ENCODE measurements at regions of chr12 and their contacts with region 1.

Region 1: DNA sequence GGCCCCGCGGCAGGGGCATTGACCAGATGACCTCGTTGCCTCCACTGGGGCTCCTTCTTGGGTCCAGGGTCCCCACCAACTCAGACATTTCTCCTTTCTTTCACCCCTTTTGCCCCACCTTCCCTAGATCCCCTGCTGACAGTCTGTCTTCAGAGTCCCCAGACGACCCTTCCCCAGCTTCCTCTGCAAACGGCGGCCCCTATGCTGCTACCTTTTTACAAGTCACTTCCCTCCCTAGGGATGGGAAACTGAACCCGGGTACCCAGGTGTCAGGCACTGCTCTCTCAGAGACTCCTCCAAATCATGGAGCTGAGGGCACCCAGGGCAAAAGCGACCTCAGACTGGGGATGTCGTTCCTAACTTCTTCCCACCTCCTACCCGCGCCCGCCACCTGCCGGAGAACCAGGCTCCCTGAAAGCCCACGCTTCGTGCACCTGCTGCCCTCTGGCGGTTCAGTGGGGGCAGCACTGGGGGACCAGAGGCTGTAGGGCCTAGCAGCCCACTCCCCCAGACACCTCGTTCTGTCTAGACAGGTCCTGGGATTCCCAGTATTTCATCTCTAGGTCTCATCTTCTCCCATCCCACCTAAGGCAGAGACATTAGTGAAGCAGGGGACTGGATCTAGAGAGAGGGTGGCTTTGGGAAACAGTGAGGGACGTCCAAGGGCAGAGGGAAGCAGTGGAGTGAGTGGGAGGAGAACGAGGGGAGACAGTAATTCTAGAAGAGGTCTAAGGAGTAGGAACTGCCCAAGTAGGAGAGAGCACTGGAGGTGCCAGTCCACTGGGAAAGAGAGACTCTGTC is 4.9 kb downstream of the ZNF385A start:
- DNase-seq: peak; percentile 78 to 92 (median 89)
- ATAC-seq: peak; percentile 100
- H3K4me3 ChIP-seq: peak overlapping the region; percentile 30 to 45
- H3K4me3 Mint-ChIP-seq: peak overlapping the region; percentile 71
- H3K27ac ChIP-seq: no peak overlapping the region
- H3K27ac Mint-ChIP-seq: no peak overlapping the region
- H3K4me1 ChIP-seq: no peaks in the 10 kb centered on the region
- H3K4me1 Mint-ChIP-seq: peaks cover 8% of the 10 kb centered on the region
- H3K27me3 ChIP-seq: no peaks in the 10 kb centered on the region
- H3K27me3 Mint-ChIP-seq: no peaks in the 10 kb centered on the region
- CTCF ChIP-seq: peak; percentile 100

Region 2: GRCh38 chr12:53825246-53826081 is 554.1 kb before region 1 on chr12:
- CTCF ChIA-PET with region 1: no interaction called
- POLR2A ChIA-PET with region 1: no interaction called
- intact Hi-C with region 1: no loop called
- DNase-seq: no peak
- ATAC-seq: no peak
- H3K4me3 ChIP-seq: no peak overlapping the region
- H3K4me3 Mint-ChIP-seq: no peak overlapping the region
- H3K27ac ChIP-seq: no peak overlapping the region
- H3K27ac Mint-ChIP-seq: no peak overlapping the region
- H3K4me1 ChIP-seq: no peaks in the 10 kb centered on the region
- H3K4me1 Mint-ChIP-seq: no peaks in the 10 kb centered on the region
- H3K27me3 ChIP-seq: peaks cover 0 to 2% of the 10 kb centered on the region in 2 experiments
- H3K27me3 Mint-ChIP-seq: peaks cover 39% of the 10 kb centered on the region
- CTCF ChIP-seq: no peak

Region 3: DNA sequence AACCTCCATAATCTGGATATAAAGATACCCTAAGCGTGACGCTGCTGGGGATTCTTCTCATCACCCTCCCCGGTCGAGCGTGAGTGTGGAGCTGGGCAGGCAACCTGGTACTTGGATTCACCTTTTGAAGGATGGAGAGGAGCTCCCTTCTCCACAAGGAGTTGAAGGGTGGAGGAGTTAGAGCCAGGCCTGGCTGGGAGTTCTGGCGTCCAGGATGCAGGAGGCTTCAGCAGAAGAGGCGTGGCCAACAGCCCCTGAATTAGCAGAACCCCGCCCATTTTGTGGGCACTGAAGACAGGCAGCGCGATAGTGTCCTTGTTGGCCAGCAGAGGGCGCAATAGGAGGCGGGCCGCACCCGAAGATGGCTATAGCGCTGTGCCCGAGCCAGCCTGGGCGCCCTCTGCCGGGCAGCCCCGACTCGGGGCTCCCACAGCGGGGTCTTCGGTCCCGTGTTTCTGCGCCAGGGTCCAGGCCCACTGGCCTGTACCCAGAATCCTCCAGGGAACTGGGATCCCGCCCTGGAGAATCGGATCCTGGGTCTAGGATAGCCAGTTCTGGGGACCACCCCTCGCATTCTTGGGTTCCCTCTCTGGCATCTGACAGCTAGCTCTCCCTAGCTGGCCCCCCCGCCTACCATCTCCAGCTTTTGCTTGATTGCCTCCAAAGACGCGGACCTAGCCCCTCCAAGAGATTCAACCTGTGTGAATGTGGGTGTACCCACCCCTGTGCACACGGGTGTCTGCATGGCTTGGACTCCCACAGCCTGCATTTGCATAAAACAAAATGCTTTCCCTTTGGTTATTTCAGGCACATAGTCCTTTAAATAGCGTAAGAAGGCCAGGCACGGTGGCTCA is 164.8 kb before region 1 on chr12:
- CTCF ChIA-PET with region 1: interaction called, 9 read pairs
- POLR2A ChIA-PET with region 1: no interaction called
- intact Hi-C with region 1: loop called in 1 of 2 experiments (anchors 2 kb)
- DNase-seq: peak; percentile 78 to 96 (median 91)
- ATAC-seq: peak; percentile 86
- H3K4me3 ChIP-seq: peak overlapping the region; percentile 34 to 47
- H3K4me3 Mint-ChIP-seq: peak overlapping the region; percentile 72
- H3K27ac ChIP-seq: no peak overlapping the region
- H3K27ac Mint-ChIP-seq: no peak overlapping the region
- H3K4me1 ChIP-seq: peaks cover 30% of the 10 kb centered on the region
- H3K4me1 Mint-ChIP-seq: peaks cover 35% of the 10 kb centered on the region
- H3K27me3 ChIP-seq: peaks cover 0 to 7% of the 10 kb centered on the region in 2 experiments
- H3K27me3 Mint-ChIP-seq: peaks cover 22% of the 10 kb centered on the region
- CTCF ChIP-seq: peak; percentile 99

Region 4: DNA sequence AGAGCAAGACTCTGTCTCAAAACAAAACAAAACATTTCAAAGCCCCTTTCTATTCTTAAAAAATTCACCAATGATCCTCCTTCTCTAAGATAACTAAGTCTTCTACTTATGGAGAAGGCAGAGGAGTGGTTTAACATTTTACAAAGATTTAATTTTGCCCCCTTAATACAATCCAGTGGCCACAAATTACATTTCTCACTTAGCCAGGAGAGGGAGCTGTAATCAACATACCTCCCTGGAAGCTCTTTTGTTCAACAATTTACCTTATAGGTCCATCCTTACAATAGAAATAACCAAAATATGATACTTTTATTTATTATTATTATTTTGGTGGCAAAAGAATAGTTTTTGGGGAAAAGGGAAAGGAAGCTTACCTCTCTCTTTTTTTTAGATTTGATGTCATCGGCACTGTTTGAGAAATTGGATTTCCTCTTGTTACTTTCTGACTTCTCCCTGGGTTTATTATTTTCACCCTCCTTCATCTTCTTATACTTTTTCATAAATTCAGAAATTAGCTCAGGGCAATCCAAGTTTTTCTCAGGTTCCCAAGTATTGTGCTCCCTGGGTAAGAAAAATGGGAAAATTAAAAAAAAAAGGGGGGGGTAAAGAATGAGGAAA is 127.8 kb before region 1 on chr12:
- CTCF ChIA-PET with region 1: interaction called, 11 read pairs
- POLR2A ChIA-PET with region 1: no interaction called
- intact Hi-C with region 1: no loop called
- DNase-seq: peak in 3 of 9 experiments; percentile 11 to 71 (median 60)
- ATAC-seq: peak; percentile 79
- H3K4me3 ChIP-seq: no peak overlapping the region
- H3K4me3 Mint-ChIP-seq: no peak overlapping the region
- H3K27ac ChIP-seq: no peak overlapping the region
- H3K27ac Mint-ChIP-seq: no peak overlapping the region
- H3K4me1 ChIP-seq: no peaks in the 10 kb centered on the region
- H3K4me1 Mint-ChIP-seq: peaks cover 11% of the 10 kb centered on the region
- H3K27me3 ChIP-seq: no peaks in the 10 kb centered on the region
- H3K27me3 Mint-ChIP-seq: no peaks in the 10 kb centered on the region
- CTCF ChIP-seq: peak; percentile 87

Region 5: GRCh38 chr12:54337280-54337842 is 42.2 kb before region 1 on chr12:
- CTCF ChIA-PET with region 1: interaction called, 21 read pairs
- POLR2A ChIA-PET with region 1: no interaction called
- intact Hi-C with region 1: no loop called
- DNase-seq: no peak
- ATAC-seq: no peak
- H3K4me3 ChIP-seq: no peak overlapping the region
- H3K4me3 Mint-ChIP-seq: no peak overlapping the region
- H3K27ac ChIP-seq: no peak overlapping the region
- H3K27ac Mint-ChIP-seq: no peak overlapping the region
- H3K4me1 ChIP-seq: no peaks in the 10 kb centered on the region
- H3K4me1 Mint-ChIP-seq: peaks cover 25% of the 10 kb centered on the region
- H3K27me3 ChIP-seq: no peaks in the 10 kb centered on the region
- H3K27me3 Mint-ChIP-seq: no peaks in the 10 kb centered on the region
- CTCF ChIP-seq: no peak

Region 6: GRCh38 chr12:54368709-54369583 is 10.7 kb before region 1 on chr12:
- CTCF ChIA-PET with region 1: interaction called, 59 read pairs
- POLR2A ChIA-PET with region 1: interaction called, 3 read pairs
- intact Hi-C with region 1: no loop called
- DNase-seq: peak; percentile 79 to 94 (median 88)
- ATAC-seq: peak; percentile 97
- H3K4me3 ChIP-seq: peak overlapping the region in 1 of 2 experiments; percentile 15
- H3K4me3 Mint-ChIP-seq: peak overlapping the region; percentile 60
- H3K27ac ChIP-seq: peak overlapping the region in 1 of 2 experiments; percentile 28
- H3K27ac Mint-ChIP-seq: no peak overlapping the region
- H3K4me1 ChIP-seq: peaks cover 30% of the 10 kb centered on the region
- H3K4me1 Mint-ChIP-seq: peaks cover 34% of the 10 kb centered on the region
- H3K27me3 ChIP-seq: no peaks in the 10 kb centered on the region
- H3K27me3 Mint-ChIP-seq: no peaks in the 10 kb centered on the region
- CTCF ChIP-seq: peak; percentile 80

Region 7: GRCh38 chr12:54419088-54419892 is 39.7 kb after region 1 on chr12 and contains the start of gene ITGA5:
- CTCF ChIA-PET with region 1: interaction called, 15 read pairs
- POLR2A ChIA-PET with region 1: no interaction called
- intact Hi-C with region 1: no loop called
- DNase-seq: peak in 5 of 9 experiments; percentile 27 to 76 (median 63)
- ATAC-seq: peak; percentile 33
- H3K4me3 ChIP-seq: peak within 1 kb of the TSS; percentile 92
- H3K4me3 Mint-ChIP-seq: peak within 1 kb of the TSS; percentile 94
- H3K27ac ChIP-seq: peak within 1 kb of the TSS; percentile 71 to 84
- H3K27ac Mint-ChIP-seq: peak within 1 kb of the TSS; percentile 97
- H3K4me1 ChIP-seq: peaks cover 52% of the 10 kb centered on the region
- H3K4me1 Mint-ChIP-seq: peaks cover 53% of the 10 kb centered on the region
- H3K27me3 ChIP-seq: no peaks in the 10 kb centered on the region
- H3K27me3 Mint-ChIP-seq: no peaks in the 10 kb centered on the region
- CTCF ChIP-seq: no peak
- total RNA-seq, gene ITGA5: 115 to 125 TPM

Region 8: GRCh38 chr12:54439521-54440255 is 60.1 kb after region 1 on chr12:
- CTCF ChIA-PET with region 1: interaction called, 51 read pairs
- POLR2A ChIA-PET with region 1: no interaction called
- intact Hi-C with region 1: no loop called
- DNase-seq: peak in 2 of 9 experiments; percentile 65 to 76
- ATAC-seq: peak; percentile 90
- H3K4me3 ChIP-seq: no peak overlapping the region
- H3K4me3 Mint-ChIP-seq: no peak overlapping the region
- H3K27ac ChIP-seq: no peak overlapping the region
- H3K27ac Mint-ChIP-seq: no peak overlapping the region
- H3K4me1 ChIP-seq: no peaks in the 10 kb centered on the region
- H3K4me1 Mint-ChIP-seq: peaks cover 9% of the 10 kb centered on the region
- H3K27me3 ChIP-seq: peaks cover 0 to 3% of the 10 kb centered on the region in 2 experiments
- H3K27me3 Mint-ChIP-seq: peaks cover 2% of the 10 kb centered on the region
- CTCF ChIP-seq: peak; percentile 82

Region 9: GRCh38 chr12:54631988-54632728 is 252.6 kb after region 1 on chr12:
- CTCF ChIA-PET with region 1: no interaction called
- POLR2A ChIA-PET with region 1: no interaction called
- intact Hi-C with region 1: no loop called
- DNase-seq: peak in 1 of 9 experiments; percentile 27
- ATAC-seq: no peak
- H3K4me3 ChIP-seq: no peak overlapping the region
- H3K4me3 Mint-ChIP-seq: no peak overlapping the region
- H3K27ac ChIP-seq: no peak overlapping the region
- H3K27ac Mint-ChIP-seq: no peak overlapping the region
- H3K4me1 ChIP-seq: no peaks in the 10 kb centered on the region
- H3K4me1 Mint-ChIP-seq: no peaks in the 10 kb centered on the region
- H3K27me3 ChIP-seq: no peaks in the 10 kb centered on the region
- H3K27me3 Mint-ChIP-seq: peaks cover 50% of the 10 kb centered on the region
- CTCF ChIP-seq: no peak

Measured in CD8-positive, alpha-beta T cell (primary cell).